ENCODE measurements at regions of chr10 and their contacts with region 1.

Region 1: DNA sequence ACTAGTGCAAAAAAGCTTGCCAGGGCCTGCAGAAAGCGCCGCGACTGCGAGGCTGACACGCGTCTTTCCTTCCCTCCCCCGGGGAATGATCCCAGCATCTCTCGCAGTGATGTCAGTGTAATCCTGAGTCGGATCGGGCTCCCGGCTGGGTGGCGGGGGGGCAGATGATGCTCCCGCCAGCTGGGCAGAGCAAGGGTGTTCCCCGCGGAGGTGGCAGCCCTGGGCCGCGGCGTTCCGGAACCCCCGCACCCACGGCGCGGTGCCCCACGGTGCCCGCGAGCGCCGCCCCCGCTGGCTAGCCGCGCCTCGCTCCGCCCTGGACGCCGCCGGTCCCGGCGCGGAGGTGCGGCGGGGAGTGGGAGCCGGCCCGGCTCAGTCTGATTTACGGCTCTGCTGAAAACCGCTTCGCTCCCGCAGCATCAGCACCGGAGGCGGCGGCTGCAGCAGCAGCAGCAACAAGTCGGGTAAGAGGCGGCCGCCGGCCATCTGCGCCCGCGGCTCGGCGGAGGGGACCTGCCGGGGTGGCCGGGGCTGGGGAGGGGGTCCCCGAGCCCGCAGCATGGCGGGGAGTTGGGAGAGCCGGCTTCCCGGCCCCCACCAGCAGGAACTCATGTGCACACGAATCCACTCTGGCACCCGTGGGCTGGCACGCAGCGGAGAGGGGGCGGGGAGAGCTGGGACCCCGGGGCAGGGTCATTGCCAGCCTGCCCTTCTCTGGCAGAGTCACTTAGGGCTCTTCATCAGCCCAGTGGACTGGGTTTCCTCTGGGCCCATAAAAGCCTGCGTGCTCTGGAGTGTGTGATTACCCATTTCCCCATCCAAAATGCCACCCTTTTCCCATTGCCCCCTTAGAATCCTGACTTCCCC is at the start of gene ZNF365:
- DNase-seq: no peak
- H3K4me3 ChIP-seq: peak within 1 kb of the TSS; percentile 53
- CTCF ChIP-seq: no peak

Region 2: DNA sequence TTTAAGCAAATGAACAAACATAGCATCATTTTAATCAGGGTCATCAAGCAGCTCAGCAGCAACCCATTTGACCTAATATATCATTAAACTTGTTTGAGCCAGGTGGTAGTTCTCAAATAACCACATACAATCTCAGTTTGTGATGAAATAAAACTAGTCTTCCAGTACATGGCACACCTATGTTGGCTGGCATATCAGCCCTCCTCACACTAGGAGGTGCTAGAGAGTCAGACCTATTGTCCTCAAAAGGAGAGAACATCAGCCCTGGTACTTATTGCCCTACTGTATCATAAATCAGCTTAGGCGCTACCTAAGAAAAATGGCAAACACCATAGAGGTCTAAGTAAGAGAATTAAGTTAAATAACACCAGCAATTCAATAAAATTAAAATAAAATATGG is 629.8 kb before region 1 on chr10:
- in situ Hi-C with region 1: loop called (anchors 10 kb)
- DNase-seq: no peak
- H3K4me3 ChIP-seq: no peak overlapping the region
- CTCF ChIP-seq: no peak

Region 3: DNA sequence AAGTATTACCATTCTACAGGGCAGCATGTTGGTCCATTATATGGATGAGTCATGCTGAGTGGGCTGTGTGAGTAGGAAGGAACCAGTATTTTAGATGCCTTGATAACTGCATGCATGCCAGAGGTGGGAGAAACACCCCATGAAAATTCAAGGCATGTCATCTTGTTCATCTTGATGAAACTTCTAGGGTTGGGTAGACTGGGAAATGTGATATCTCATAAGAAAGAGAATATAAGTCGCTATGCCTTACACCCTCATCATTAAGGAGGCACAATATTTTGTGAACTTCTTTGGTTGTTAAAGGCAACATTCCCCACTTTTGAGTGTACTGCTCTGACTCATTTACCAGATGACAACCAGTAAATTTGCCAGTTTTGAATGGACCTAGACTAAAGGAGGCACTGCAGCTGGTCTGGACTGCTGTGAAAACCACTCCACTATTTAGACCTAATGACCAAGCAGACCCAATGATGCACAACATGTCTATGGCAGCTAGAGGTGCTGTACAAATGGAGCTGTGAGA is 47.9 kb after region 1 on chr10:
- in situ Hi-C with region 1: no loop called
- DNase-seq: no peak
- H3K4me3 ChIP-seq: no peak overlapping the region
- CTCF ChIP-seq: no peak

Measured in astrocyte of the cerebellum (primary cell).